ENCODE measurements at regions of chr15 and their contacts with region 1.

Region 1: DNA sequence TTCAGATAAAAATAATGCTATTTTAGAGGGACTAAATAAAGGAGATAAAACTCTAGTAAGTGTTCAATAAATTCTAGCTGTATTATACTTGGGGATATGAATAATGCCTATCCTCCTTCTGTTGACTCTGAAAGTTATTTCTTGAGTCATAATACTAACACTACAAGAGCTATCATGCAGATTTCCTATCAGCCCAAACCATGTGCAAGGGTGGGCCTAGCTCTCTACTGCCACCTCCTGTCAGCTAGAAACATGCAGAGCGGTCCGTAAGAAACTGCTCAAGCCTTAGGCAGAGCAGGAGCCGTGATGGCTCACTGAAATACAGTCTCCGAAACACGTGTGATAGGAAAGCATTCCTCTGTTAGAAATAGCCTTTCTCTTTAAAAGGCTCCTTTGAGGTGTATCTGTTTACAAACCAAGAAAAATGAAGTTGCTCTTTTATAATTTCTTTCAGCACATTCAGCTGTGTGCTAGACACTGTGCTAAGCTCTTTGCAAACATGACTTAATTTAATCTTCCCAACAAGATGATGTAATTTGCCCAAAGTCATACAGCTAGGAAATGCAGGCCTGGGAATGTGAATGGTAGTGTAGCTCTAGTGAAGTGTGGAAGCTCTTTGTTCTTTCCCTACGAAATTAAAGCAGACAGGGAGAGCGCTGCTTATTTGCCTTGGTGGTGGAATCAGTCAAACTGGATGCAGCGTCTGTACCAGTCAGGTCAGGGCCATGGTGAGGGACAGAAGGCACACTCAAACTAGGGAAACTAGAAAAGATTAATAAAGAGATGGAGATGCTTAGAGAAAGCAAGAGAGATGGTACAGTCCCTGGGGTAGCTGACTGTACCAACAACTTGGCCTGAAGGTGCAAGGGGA is 43.1 kb downstream of the MTHFS start:
- ATAC-seq: peak; percentile 98 to 100 (median 99)
- H3K4me3 ChIP-seq: no peak overlapping the region
- H3K27ac ChIP-seq: no peak overlapping the region
- H3K4me1 ChIP-seq: peaks cover 4 to 7% of the 10 kb centered on the region in 2 donors

Region 2: GRCh38 chr15:79339564-79340314 is 514.0 kb before region 1 on chr15:
- in situ Hi-C with region 1: loop called in 1 of 9 experiments (anchors 25 kb)
- ATAC-seq: peak in 7 of 8 experiments; percentile 32 to 52 (median 42)
- H3K4me3 ChIP-seq: no peak overlapping the region
- H3K27ac ChIP-seq: no peak overlapping the region
- H3K4me1 ChIP-seq: no peaks in the 10 kb centered on the region

Region 3: GRCh38 chr15:79370716-79371115 is 483.0 kb before region 1 on chr15:
- in situ Hi-C with region 1: loop called in 1 of 9 experiments (anchors 25 kb)
- ATAC-seq: no peak
- H3K4me3 ChIP-seq: no peak overlapping the region
- H3K27ac ChIP-seq: no peak overlapping the region
- H3K4me1 ChIP-seq: peaks cover 0 to 6% of the 10 kb centered on the region in 2 donors

Region 4: DNA sequence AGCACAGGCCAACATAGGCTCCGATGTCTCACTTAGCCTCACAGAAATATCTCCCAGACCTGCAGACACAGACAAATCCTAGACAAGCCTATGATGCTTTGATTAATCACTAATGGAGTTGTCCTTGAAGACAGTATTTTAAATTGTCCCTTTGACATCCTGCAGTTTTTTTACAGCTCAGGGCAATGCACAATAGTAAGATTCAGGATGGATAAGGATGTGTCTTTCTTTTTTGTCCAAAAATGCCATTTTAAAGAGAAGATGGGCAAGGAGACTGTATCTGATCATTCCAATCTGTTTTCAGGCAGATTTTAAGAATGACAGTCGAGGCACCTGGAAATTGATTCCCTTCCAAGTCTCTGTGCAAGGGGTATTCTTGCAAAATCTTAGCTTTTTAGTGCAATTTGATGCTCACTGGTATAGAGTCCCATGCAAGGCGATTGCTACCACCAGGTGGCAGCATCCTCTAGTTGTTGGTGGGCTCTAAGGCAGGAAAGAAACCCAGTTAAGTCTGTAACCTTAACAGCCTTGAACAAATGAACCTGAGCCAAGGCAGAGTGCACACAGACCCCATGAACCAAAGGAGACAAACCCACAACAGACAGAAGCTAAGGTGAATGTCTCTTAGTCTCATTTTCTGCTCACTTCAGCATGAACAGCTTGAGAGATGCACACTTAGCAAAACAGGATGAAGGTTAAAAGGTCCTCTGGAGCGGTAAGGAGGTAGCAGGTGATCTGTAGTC is 472.8 kb before region 1 on chr15:
- in situ Hi-C with region 1: loop called in 2 of 9 experiments (anchors 10 kb)
- ATAC-seq: peak; percentile 93 to 100 (median 98)
- H3K4me3 ChIP-seq: no peak overlapping the region
- H3K27ac ChIP-seq: no peak overlapping the region
- H3K4me1 ChIP-seq: no peaks in the 10 kb centered on the region

Region 5: GRCh38 chr15:79615754-79616153 is 237.9 kb before region 1 on chr15:
- in situ Hi-C with region 1: loop called in 1 of 9 experiments (anchors 25 kb)
- ATAC-seq: no peak
- H3K4me3 ChIP-seq: no peak overlapping the region
- H3K27ac ChIP-seq: no peak overlapping the region
- H3K4me1 ChIP-seq: no peaks in the 10 kb centered on the region

Measured in motor neuron (in vitro differentiated cells).